Activated CD8-positive, alpha-beta memory T cell treated with anti-CD3 and anti-CD28 coated beads, Interleukin-2, amount 10 ng/mL, durations not matched to agents 7 days and 5 days (primary cell): ENCODE measurements at regions of chr22 and their contacts with region 1.

Region 1: DNA sequence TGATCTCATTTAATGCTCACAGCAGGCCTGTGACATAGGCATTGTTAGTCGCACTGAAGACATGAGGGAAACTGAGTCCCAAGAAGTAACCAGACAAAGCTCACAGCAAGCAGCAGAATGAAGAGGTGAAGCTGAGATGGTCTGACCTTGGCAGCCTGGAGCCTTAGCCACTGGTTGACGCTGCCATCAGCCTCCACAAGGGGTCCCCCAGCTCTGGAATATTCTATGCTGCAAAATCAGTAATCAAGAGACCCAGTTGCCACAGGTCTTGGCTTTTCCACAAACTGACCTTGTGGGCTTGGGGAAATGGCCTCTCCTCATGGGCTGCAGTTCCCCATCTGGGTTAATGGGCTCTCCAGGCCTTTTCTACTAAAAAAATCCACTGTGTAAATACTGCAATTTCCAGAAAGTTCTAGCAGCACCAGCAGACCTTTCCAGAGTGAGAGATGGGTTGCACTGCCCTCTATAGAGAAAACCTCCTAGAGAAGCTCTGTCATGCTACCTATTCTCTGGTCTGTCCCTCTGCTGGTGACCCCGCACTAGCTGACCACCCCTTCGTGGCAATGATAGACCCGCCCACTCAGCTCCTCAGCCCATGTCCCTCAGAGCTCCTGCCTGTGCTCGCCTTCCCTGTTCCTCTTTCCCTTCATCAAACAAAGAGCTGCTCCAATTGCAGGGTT is 22.6 kb upstream of the ISX start:
- DNase-seq: no peak
- ATAC-seq: no peak
- H3K4me3 Mint-ChIP-seq: no peak overlapping the region
- H3K27ac Mint-ChIP-seq: no peak overlapping the region
- H3K4me1 Mint-ChIP-seq: no peaks in the 10 kb centered on the region
- H3K27me3 Mint-ChIP-seq: no peaks in the 10 kb centered on the region

Region 2: DNA sequence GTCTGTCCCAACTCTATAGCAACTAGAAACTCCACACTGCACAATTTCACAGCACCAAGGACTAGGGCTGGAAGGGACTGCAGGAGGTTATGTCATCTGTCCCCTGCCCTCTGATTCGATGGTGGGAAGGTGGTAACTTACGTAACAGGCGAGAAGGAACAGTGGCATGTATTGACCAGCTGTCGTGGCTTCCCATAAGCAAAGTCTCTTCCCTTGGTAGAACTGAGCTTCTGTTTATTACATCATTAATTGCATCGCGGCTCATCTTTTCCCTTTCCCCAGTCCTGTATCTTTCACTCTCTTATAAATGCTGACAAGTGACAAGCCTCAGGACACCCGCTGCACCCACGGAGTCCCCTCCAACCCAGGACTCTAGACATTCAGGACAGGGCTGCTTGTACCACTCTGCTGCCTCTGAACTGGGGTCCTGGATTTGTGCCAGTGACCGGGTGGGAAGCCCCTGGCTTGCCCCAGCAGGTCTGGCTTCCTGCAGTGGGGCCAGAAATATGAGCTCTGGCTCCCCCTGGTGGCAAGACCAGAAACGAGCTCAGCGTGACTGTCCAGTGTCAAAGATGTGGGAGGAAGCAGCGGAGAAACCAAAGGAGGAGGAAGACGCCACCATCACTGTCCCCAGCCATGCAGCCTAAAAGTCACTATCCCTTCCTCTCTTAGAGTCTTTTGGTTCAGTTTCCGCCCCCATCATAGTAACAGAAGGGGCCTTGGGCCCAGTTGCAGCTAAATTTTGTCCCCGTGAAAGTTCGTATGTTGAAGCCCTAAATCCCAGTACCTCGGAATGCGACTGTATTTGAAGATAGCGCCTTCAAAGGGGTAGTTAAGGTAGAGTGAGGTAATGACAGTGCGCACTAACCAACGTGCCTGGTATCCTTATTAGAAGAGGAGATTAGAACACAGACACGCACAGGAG is 107.1 kb after region 1 on chr22:
- CTCF ChIA-PET with region 1: interaction called, 15 read pairs
- DNase-seq: peak; percentile 73
- ATAC-seq: peak; percentile 47
- H3K4me3 Mint-ChIP-seq: no peak overlapping the region
- H3K27ac Mint-ChIP-seq: no peak overlapping the region
- H3K4me1 Mint-ChIP-seq: no peaks in the 10 kb centered on the region
- H3K27me3 Mint-ChIP-seq: peaks cover 2% of the 10 kb centered on the region

Region 3: GRCh38 chr22:35172442-35172841 is 129.1 kb after region 1 on chr22:
- CTCF ChIA-PET with region 1: no interaction called
- DNase-seq: no peak
- ATAC-seq: no peak
- H3K4me3 Mint-ChIP-seq: no peak overlapping the region
- H3K27ac Mint-ChIP-seq: no peak overlapping the region
- H3K4me1 Mint-ChIP-seq: no peaks in the 10 kb centered on the region
- H3K27me3 Mint-ChIP-seq: peaks cover 11% of the 10 kb centered on the region